Activated CD4-positive, alpha-beta memory T cell treated with anti-CD3 and anti-CD28 coated beads, Interleukin-2, amount 10 ng/mL, durations not matched to agents 7 days and 5 days (primary cell): ENCODE measurements at regions of chr17 and their contacts with region 1.

Region 1: GRCh38 chr17:39777534-39778365 is 40.0 kb downstream of the GRB7 start:
- DNase-seq: no peak
- H3K4me3 Mint-ChIP-seq: peak overlapping the region; percentile 74
- H3K27ac Mint-ChIP-seq: peak overlapping the region; percentile 82
- H3K4me1 Mint-ChIP-seq: peaks cover 80% of the 10 kb centered on the region
- H3K27me3 Mint-ChIP-seq: no peaks in the 10 kb centered on the region

Region 2: GRCh38 chr17:39351508-39351907 is 426.2 kb before region 1 on chr17:
- CTCF ChIA-PET with region 1: no interaction called
- POLR2A ChIA-PET with region 1: no interaction called
- DNase-seq: no peak
- H3K4me3 Mint-ChIP-seq: no peak overlapping the region
- H3K27ac Mint-ChIP-seq: no peak overlapping the region
- H3K4me1 Mint-ChIP-seq: no peaks in the 10 kb centered on the region
- H3K27me3 Mint-ChIP-seq: no peaks in the 10 kb centered on the region

Region 3: DNA sequence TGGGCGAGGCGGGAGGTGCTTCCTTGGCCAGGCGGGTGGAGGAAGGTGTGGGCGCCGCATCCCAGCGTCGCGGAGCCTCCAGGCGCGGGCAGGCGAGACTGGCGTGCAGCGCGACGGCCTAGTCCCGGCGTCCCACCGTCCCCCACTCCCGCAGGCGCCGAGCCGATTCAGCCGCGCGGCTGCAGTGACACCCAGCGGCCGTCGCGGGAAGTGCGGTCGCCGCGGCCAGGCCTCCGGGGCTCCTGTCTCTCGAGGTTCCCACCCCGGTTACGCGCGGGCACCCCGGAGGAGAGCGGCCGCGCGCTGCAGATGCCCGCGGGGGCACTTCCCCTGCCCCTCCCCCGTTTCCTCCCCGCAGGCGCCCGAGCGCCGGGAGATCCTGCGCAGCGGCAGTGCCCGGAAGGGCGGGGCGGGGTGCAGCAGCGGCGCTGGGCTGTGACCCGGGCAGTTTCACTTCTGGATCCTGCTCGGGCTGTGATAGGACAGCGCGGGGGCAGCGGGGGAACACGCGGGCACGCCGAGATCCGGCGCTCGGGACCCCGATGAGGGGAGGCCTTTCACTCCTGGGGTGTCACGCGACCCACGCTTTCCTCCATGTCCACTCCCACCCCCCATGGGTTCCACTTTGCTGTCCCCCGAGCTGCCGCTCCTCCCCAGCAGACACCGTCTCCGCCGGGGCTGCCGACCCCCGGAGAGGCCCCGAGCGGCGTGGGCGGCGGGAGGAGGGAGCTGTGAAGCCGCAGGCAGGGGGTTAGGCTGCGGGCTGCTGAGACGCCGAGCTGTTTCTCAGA is 23.4 kb before region 1 on chr17:
- CTCF ChIA-PET with region 1: interaction called, 5 read pairs
- POLR2A ChIA-PET with region 1: interaction called, 57 read pairs
- DNase-seq: peak; percentile 99
- H3K4me3 Mint-ChIP-seq: peak overlapping the region; percentile 77
- H3K27ac Mint-ChIP-seq: peak overlapping the region; percentile 67
- H3K4me1 Mint-ChIP-seq: peaks cover 59% of the 10 kb centered on the region
- H3K27me3 Mint-ChIP-seq: no peaks in the 10 kb centered on the region

Region 4: GRCh38 chr17:39794249-39794970 is 16.7 kb after region 1 on chr17:
- CTCF ChIA-PET with region 1: interaction called, 17 read pairs
- POLR2A ChIA-PET with region 1: interaction called, 141 read pairs
- DNase-seq: no peak
- H3K4me3 Mint-ChIP-seq: no peak overlapping the region
- H3K27ac Mint-ChIP-seq: peak overlapping the region; percentile 88
- H3K4me1 Mint-ChIP-seq: peaks cover 63% of the 10 kb centered on the region
- H3K27me3 Mint-ChIP-seq: no peaks in the 10 kb centered on the region

Region 5: DNA sequence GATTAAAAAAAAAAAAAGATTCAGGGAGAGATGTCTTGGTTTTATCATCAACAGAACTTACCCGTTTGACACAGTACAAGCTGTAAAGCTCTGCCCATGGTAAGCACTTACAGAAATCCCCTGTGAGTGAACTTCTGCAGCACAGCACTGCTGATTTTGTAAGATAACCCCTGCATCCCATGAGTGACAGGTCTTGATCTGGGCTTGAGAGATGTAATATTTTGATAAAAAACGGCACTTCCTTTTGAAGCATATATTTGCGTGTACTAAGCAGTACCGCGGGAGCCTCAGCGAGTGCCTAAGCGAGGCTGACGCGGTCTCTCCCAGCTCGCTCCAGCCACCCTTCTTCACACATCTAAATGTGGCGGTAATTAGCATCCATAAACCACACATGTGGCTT is 35.9 kb after region 1 on chr17:
- CTCF ChIA-PET with region 1: no interaction called
- POLR2A ChIA-PET with region 1: interaction called, 18 read pairs
- DNase-seq: peak; percentile 62
- H3K4me3 Mint-ChIP-seq: peak overlapping the region; percentile 59
- H3K27ac Mint-ChIP-seq: peak overlapping the region; percentile 67
- H3K4me1 Mint-ChIP-seq: peaks cover 69% of the 10 kb centered on the region
- H3K27me3 Mint-ChIP-seq: no peaks in the 10 kb centered on the region

Region 6: GRCh38 chr17:39822051-39822451 is 44.3 kb after region 1 on chr17:
- CTCF ChIA-PET with region 1: interaction called, 5 read pairs
- POLR2A ChIA-PET with region 1: interaction called, 11 read pairs
- DNase-seq: no peak
- H3K4me3 Mint-ChIP-seq: no peak overlapping the region
- H3K27ac Mint-ChIP-seq: no peak overlapping the region
- H3K4me1 Mint-ChIP-seq: peaks cover 52% of the 10 kb centered on the region
- H3K27me3 Mint-ChIP-seq: no peaks in the 10 kb centered on the region

Region 7: DNA sequence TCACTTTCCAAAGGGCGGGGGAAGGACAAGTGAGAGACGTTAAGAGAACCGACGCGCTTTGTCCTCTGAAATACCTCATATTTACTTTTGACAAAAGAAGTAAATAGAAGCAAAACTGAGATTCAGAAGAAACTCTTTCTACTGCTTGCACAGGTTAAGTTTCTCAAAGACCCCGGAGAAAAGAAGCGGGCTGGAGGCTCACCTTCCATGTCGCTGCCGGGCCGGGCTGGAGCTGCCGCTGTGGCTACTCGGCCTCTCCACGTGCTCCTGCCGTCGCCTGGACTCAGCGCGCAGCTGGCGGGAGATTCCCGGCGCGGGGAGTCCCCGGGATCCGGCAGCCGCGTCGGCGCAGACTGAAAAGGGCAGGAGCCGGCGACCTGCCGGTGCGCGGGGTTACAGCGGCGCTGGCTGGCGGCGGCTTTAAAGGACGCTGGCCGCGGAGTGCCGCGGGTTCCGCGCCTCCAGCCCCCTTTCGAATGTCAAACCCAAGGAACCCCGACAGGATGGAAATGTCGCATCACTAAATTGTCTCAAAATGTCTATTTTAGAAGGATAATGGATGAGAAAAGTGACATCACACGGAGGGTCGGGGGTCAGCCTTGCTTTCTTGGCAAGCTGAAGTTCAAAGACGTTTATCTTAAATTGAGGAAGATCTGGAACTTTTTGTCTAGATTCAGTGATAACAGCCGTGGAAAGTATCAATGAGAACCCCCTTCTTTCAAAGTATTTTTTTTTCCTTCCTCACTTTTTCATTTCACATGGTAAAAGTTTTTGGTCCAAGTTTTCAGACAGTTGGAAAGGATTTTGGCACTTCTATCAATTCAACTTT is 86.4 kb after region 1 on chr17 and contains the start of gene IKZF3:
- CTCF ChIA-PET with region 1: interaction called, 4 read pairs
- POLR2A ChIA-PET with region 1: interaction called, 43 read pairs
- DNase-seq: peak; percentile 80
- H3K4me3 Mint-ChIP-seq: peak within 1 kb of the TSS; percentile 84
- H3K27ac Mint-ChIP-seq: peak within 1 kb of the TSS; percentile 80
- H3K4me1 Mint-ChIP-seq: peaks cover 64% of the 10 kb centered on the region
- H3K27me3 Mint-ChIP-seq: no peaks in the 10 kb centered on the region
- total RNA-seq, gene IKZF3: 37.9 to 38.2 TPM